Naive thymus-derived CD4-positive, alpha-beta T cell (primary cell): ENCODE measurements at regions of chr22 and their contacts with region 1.

Region 1: DNA sequence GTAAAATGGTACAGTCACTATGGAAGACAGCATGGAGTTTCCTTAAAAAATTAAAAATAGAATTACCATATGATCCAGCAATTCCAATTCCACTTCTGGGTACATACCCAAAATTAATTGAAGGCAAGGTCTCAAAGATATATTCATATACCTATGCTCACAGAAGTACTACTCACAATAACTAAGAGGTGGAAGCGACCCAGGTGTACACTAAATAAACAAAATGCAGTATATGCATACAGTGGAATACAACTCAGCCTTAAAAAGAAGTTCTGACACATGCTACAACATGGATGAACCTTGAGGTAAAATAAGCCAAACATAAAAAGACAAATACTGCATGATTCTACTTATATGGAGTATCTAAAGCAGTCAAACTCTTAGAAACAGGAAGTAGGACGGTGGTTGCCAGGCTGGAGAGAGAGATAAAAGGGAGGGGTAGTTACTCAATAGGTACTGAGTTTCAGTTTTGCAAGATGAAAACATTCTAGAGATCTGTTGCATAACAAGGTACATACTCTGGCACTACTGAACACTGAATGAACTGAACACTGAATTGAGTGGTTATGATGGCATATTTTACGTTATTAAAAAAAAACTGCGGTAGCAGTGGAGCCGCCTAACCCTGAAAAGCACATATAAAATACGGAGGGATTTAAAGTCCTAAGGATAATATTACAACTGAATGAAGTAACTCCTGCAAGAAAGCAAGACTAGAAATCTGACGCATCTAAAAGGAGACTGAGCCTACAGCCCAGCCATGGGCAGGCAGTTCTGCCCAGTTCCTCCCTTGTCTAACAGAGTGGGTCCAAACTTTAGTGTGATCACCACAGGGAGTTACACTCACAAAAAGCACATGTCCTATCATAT is 12.8 kb downstream of the DGCR2 start:
- DNase-seq: peak in 7 of 9 donors; percentile 62 to 88 (median 84)
- ATAC-seq: peak; percentile 92
- H3K4me3 ChIP-seq: peak overlapping the region; percentile 49
- H3K4me3 Mint-ChIP-seq: peak overlapping the region; percentile 77 to 90 (median 84)
- H3K27ac ChIP-seq: peak overlapping the region; percentile 79
- H3K27ac Mint-ChIP-seq: peak overlapping the region; percentile 84 to 100 (median 97)
- H3K4me1 ChIP-seq: peaks cover 40 to 55% of the 10 kb centered on the region in 2 donors
- H3K4me1 Mint-ChIP-seq: peaks cover 50 to 87% (median 73%) of the 10 kb centered on the region in 7 donors
- H3K27me3 ChIP-seq: no peaks in the 10 kb centered on the region
- H3K27me3 Mint-ChIP-seq: no peaks in the 10 kb centered on the region

Region 2: GRCh38 chr22:19122143-19122751 is 12.8 kb after region 1 on chr22 and contains the start of gene DGCR2:
- CTCF ChIA-PET with region 1: interaction called, 5 read pairs
- POLR2A ChIA-PET with region 1: interaction called, 88 read pairs
- intact Hi-C with region 1: loop called (anchors 1 to 2 kb)
- DNase-seq: peak; percentile 92 to 96 (median 94)
- ATAC-seq: peak; percentile 99
- H3K4me3 ChIP-seq: peak within 1 kb of the TSS; percentile 90
- H3K4me3 Mint-ChIP-seq: peak within 1 kb of the TSS; percentile 90 to 94 (median 93)
- H3K27ac ChIP-seq: peak within 1 kb of the TSS; percentile 91
- H3K27ac Mint-ChIP-seq: peak within 1 kb of the TSS; percentile 69 to 97 (median 87)
- H3K4me1 ChIP-seq: peaks cover 34 to 42% of the 10 kb centered on the region in 2 donors
- H3K4me1 Mint-ChIP-seq: peaks cover 36 to 53% (median 50%) of the 10 kb centered on the region in 7 donors
- H3K27me3 ChIP-seq: no peaks in the 10 kb centered on the region
- H3K27me3 Mint-ChIP-seq: peaks cover 0 to 2% (median 0%) of the 10 kb centered on the region in 5 donors
- total RNA-seq, gene DGCR2: 38.8 to 79.1 (median 50.4) TPM

Region 3: DNA sequence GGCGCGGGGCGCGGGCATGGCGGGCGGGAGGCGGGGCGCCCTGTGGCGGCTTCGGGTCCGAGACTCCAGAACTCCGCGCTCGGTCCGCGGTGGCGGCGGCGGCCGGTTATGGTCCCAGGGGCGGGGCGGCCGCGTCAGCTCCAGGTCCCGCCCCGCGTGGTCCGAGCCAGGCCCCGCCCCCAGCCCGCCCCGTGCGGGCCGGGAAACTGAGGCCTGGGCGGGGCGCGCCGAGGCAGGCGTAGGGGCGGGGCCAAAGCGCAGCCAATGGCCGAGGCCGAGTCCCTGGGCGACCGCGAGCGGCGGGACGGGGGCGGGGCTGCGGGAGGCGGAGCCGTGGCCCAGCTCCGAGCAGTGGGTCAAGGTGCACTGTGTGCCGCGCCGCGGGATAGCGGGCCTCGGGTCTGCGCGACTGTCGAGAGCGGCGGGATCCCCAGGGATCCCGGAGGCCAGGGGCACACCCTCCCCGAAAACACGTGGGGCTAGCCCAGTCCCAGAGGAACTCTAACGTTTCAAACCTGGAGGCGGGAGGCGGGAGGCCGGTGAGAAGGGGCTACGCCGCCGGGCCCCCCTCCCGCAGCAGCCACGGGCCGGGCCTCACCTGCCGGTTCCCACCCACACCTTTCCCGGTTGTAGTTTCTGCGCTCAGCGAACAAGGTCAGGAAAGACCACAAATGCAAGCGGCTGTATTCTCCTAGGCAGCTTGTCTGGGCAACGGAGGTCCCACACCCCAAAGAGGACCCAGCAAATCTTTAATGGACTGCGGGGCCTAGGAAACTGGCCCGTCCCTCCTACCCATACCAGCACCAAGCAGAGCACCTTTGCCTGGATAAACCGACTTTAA is 69.4 kb after region 1 on chr22 and contains the start of gene SLC25A1:
- CTCF ChIA-PET with region 1: interaction called, 3 read pairs
- POLR2A ChIA-PET with region 1: no interaction called
- intact Hi-C with region 1: loop called (anchors 1 to 5 kb)
- DNase-seq: peak in 8 of 9 donors; percentile 42 to 96 (median 49)
- ATAC-seq: peak; percentile 82
- H3K4me3 ChIP-seq: peak within 1 kb of the TSS; percentile 58
- H3K4me3 Mint-ChIP-seq: peak within 1 kb of the TSS; percentile 83 to 92 (median 86)
- H3K27ac ChIP-seq: peak within 1 kb of the TSS; percentile 63
- H3K27ac Mint-ChIP-seq: peak within 1 kb of the TSS; percentile 31 to 92 (median 85)
- H3K4me1 ChIP-seq: peaks cover 7 to 9% of the 10 kb centered on the region in 2 donors
- H3K4me1 Mint-ChIP-seq: peaks cover 13 to 28% (median 23%) of the 10 kb centered on the region in 7 donors
- H3K27me3 ChIP-seq: no peaks in the 10 kb centered on the region
- H3K27me3 Mint-ChIP-seq: no peaks in the 10 kb centered on the region
- total RNA-seq, gene SLC25A1: 19.3 to 34.0 (median 30.7) TPM

Region 4: DNA sequence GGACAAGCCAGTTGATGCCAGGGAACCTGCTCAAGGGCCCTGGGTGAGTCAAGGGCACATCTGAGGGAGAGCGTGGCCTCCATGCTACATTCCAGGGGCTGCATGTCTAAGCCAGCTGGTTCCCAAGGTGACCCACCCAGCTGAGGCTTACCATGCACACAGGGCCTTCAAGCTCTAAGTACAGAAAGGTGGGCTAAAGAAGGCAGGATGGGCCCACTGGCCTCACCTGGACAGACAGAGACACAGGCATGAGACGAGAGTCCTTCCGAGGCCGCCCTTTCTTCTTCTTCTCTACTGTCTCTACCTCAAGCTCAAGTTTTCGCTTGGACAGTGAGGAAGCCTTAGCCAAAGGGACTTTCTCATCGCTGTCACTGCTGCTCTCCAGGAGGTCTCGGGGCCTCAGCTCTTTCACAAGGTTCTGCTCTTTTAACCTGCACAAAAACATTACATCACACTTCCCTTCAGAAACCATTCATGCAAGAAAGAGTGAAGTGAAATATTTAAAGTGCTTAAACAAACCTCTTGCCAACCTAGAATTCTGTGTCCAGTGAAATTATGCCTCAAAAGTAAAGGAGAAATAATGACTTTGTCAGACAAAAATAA is 252.2 kb after region 1 on chr22:
- CTCF ChIA-PET with region 1: no interaction called
- POLR2A ChIA-PET with region 1: no interaction called
- intact Hi-C with region 1: loop called in 1 of 2 experiments (anchors 10 kb)
- DNase-seq: no peak
- ATAC-seq: peak; percentile 38
- H3K4me3 ChIP-seq: no peak overlapping the region
- H3K4me3 Mint-ChIP-seq: no peak overlapping the region
- H3K27ac ChIP-seq: no peak overlapping the region
- H3K27ac Mint-ChIP-seq: peak overlapping the region in 1 of 9 donors; percentile 47
- H3K4me1 ChIP-seq: no peaks in the 10 kb centered on the region
- H3K4me1 Mint-ChIP-seq: no peaks in the 10 kb centered on the region
- H3K27me3 ChIP-seq: no peaks in the 10 kb centered on the region
- H3K27me3 Mint-ChIP-seq: no peaks in the 10 kb centered on the region

Region 5: GRCh38 chr22:19629720-19630419 is 520.4 kb after region 1 on chr22:
- CTCF ChIA-PET with region 1: interaction called, 6 read pairs
- POLR2A ChIA-PET with region 1: no interaction called
- intact Hi-C with region 1: loop called in 1 of 2 experiments (anchors 1 kb)
- DNase-seq: peak; percentile 65 to 91 (median 86)
- ATAC-seq: peak; percentile 97
- H3K4me3 ChIP-seq: no peak overlapping the region
- H3K4me3 Mint-ChIP-seq: peak overlapping the region in 1 of 10 donors; percentile 26
- H3K27ac ChIP-seq: no peak overlapping the region
- H3K27ac Mint-ChIP-seq: peak overlapping the region in 3 of 9 donors; percentile 6 to 56 (median 43)
- H3K4me1 ChIP-seq: peaks cover 0 to 7% of the 10 kb centered on the region in 2 donors
- H3K4me1 Mint-ChIP-seq: peaks cover 3 to 22% (median 10%) of the 10 kb centered on the region in 7 donors
- H3K27me3 ChIP-seq: no peaks in the 10 kb centered on the region
- H3K27me3 Mint-ChIP-seq: peaks cover 0 to 3% (median 0%) of the 10 kb centered on the region in 5 donors

Region 6: DNA sequence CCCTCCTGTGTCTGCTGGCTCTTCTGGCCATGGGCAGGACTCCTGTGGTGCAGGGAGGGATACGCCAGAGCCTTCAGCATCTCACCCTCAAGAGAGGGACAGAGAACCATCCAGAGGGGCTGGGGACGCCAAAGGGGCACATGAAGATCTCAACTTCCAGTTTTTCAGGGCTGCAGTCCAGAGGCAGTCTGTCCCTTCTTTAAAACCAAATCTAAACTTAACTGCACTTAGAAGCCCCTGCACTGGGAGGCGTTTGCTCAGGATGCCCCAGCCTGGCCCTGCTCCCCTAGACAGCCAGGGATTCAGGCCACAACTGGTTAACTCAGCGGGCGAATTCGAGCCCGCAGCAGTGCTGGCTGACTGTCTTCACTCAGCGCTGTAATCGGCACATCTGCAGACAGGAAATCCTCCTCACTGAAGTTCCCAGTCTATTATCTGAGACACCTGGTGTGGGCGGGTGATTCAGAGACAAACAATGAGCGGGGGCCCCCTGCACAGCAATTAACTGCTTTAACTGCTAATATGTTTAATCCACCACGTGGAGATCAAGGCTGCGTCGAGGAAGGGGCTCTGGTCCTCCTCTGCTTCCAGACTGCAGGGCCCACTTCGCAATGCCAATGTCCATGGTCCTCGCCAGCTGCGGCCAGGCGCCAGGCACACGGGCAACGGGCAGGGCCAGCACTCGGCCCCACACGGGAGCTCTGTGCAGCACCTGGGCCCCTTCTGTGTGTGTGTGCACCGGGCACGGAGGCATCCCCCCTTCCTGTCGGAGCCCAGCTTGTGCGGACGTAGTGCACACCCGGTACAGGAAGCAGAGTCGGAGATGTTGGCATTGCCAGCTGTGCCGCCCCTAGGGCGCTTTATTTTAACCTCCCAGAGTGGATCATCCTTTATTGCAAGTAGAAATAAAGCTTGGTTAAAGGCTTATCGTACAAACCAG is 782.2 kb after region 1 on chr22:
- CTCF ChIA-PET with region 1: no interaction called
- POLR2A ChIA-PET with region 1: no interaction called
- intact Hi-C with region 1: loop called in 1 of 2 experiments (anchors 5 kb)
- DNase-seq: peak; percentile 39 to 89 (median 86)
- ATAC-seq: peak; percentile 90
- H3K4me3 ChIP-seq: peak overlapping the region; percentile 67
- H3K4me3 Mint-ChIP-seq: peak overlapping the region; percentile 80 to 91 (median 86)
- H3K27ac ChIP-seq: peak overlapping the region; percentile 84
- H3K27ac Mint-ChIP-seq: peak overlapping the region; percentile 92 to 100 (median 99)
- H3K4me1 ChIP-seq: peaks cover 35 to 96% of the 10 kb centered on the region in 2 donors
- H3K4me1 Mint-ChIP-seq: peaks cover 37 to 96% (median 84%) of the 10 kb centered on the region in 7 donors
- H3K27me3 ChIP-seq: no peaks in the 10 kb centered on the region
- H3K27me3 Mint-ChIP-seq: no peaks in the 10 kb centered on the region